GM23248 (cell line): ENCODE measurements at regions of chr14 and their contacts with region 1.

Region 1: DNA sequence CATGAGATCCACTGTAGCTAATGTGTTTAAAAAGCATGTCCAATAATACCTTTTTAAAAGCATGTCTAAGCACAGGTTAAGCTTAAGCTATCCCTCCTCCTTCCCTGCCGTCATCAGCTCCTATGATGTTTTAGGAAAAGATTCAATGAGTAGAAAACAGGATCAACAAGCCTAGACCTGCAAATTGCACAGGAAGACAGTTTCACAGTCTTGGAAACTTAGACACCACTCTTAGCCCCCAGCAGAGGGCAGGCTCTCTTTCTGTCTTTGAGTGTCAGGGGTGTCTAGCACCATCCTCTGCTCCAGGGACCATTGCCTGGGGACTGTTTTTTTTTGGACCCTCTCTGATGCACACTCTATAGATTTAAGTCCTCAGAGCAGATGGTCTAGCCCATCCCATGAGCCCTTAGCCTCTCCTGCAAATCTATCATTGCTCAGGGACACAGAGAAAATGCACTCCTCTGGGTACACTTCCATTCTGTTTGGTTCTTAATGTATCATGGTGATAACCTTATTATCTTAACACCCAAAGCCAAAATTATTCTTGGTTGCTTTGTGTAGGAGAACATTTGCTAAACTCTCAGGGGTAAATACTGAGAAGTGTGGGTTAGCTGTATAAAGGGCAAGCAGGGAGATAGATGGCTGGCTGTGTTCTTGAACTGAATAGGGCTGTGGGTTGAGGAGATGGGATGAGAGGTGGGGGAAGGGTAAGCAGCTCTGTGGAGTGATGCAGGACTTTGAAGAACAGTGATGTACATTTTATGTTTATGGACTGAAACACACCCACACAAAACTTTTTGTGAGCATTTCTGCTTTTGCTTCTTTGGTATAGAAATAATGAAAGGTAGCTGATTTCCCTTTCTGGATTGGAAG is 259.9 kb upstream of the DDHD1 start:
- DNase-seq: peak; percentile 41
- H3K4me3 ChIP-seq: no peak overlapping the region
- H3K27ac ChIP-seq: no peak overlapping the region
- H3K4me1 ChIP-seq: peaks cover 23% of the 10 kb centered on the region
- H3K27me3 ChIP-seq: no peaks in the 10 kb centered on the region

Region 2: GRCh38 chr14:54329082-54329695 is 916.1 kb after region 1 on chr14:
- in situ Hi-C with region 1: loop called (anchors 25 kb)
- DNase-seq: peak; percentile 69
- H3K4me3 ChIP-seq: no peak overlapping the region
- H3K27ac ChIP-seq: no peak overlapping the region
- H3K4me1 ChIP-seq: no peaks in the 10 kb centered on the region
- H3K27me3 ChIP-seq: 0 out of 2 replicates have a peak, but pooled peaks cover 7% of the 10 kb centered on the region